Panc1 (cell line): ENCODE measurements at regions of chr20 and their contacts with region 1.

Region 1: GRCh38 chr20:59087829-59088433 is 45.3 kb upstream of the PRELID3B start:
- DNase-seq: peak; percentile 38
- ATAC-seq: peak; percentile 94
- H3K4me3 ChIP-seq: no peak overlapping the region
- H3K27ac ChIP-seq: no peak overlapping the region
- H3K4me1 ChIP-seq: no peaks in the 10 kb centered on the region
- H3K27me3 ChIP-seq: peaks cover 11% of the 10 kb centered on the region
- CTCF ChIP-seq: peak; percentile 92

Region 2: DNA sequence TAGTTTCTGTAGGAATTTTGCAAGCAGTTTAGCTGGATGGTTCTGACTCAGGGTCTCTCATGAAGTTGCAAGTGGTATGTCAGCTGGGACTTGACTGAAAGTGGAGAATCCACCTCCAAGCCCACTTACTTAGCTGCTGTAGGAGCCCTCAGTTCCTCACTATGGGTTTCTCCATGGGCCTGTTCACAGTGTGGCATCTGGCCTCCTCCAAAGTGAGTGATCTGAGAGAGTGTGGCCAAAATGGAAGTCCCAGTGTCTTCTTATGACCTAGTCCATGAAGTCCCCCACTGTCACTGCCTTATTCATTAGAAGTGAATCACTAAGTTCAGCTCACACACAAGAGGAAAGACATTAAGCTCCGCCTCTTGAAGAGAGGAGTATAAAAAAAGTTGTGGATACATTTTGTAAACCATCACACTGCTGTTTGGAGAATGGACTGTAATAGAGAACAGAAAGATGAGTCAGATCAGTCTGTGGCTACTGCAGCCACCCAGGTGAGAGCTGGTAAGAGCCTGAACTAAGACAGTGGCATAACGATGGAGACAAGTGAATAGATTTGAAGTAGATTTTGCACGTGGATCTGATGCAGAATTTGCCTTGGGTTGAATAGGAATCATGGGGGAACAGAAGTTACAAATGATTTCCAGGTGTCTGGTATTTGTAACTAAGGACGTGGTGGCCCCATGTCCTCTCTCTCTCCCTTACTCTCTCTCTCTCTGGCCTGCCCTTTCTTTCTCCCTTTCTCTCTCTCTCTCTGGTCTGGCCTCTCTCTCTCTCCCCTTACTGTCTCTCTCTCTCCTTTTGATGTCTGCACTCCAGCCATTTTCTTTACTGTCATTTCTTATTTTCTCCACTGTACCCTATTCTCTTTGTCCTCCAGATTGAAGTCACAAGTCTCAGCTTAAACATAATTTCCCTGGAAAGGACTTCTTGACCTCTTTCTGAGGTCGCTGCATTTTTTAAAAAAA is 111.6 kb before region 1 on chr20:
- CTCF ChIA-PET with region 1: no interaction called
- POLR2A ChIA-PET with region 1: no interaction called
- in situ Hi-C with region 1: no loop called
- intact Hi-C with region 1: no loop called
- DNase-seq: no peak
- ATAC-seq: no peak
- H3K4me3 ChIP-seq: no peak overlapping the region
- H3K27ac ChIP-seq: no peak overlapping the region
- H3K4me1 ChIP-seq: no peaks in the 10 kb centered on the region
- H3K27me3 ChIP-seq: no peaks in the 10 kb centered on the region
- CTCF ChIP-seq: no peak

Region 3: DNA sequence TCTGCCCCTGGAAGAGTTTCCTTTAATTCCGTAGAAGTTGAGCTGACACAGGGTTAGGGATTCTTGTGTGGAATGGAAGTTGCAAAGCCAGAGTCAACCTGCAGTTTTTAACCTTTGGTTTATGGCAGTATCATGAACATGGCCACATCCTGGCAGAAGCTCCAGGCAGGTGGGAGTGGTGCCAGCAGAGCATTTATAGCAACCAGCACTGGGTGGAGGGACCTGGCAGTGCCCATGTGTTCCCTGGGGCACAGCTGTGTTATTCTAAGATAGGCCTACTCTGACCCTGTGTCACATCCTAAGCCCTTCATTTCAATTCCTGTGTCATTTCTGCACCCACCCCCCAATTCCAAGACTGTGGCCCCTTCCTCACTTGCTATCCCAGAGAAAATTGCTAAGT is 49.6 kb after region 1 on chr20:
- CTCF ChIA-PET with region 1: no interaction called
- POLR2A ChIA-PET with region 1: no interaction called
- in situ Hi-C with region 1: no loop called
- intact Hi-C with region 1: no loop called
- DNase-seq: no peak
- ATAC-seq: no peak
- H3K4me3 ChIP-seq: no peak overlapping the region
- H3K27ac ChIP-seq: no peak overlapping the region
- H3K4me1 ChIP-seq: no peaks in the 10 kb centered on the region
- H3K27me3 ChIP-seq: peaks cover 3% of the 10 kb centered on the region; the same call in 1 of the 2 replicates
- CTCF ChIP-seq: no peak

Region 4: DNA sequence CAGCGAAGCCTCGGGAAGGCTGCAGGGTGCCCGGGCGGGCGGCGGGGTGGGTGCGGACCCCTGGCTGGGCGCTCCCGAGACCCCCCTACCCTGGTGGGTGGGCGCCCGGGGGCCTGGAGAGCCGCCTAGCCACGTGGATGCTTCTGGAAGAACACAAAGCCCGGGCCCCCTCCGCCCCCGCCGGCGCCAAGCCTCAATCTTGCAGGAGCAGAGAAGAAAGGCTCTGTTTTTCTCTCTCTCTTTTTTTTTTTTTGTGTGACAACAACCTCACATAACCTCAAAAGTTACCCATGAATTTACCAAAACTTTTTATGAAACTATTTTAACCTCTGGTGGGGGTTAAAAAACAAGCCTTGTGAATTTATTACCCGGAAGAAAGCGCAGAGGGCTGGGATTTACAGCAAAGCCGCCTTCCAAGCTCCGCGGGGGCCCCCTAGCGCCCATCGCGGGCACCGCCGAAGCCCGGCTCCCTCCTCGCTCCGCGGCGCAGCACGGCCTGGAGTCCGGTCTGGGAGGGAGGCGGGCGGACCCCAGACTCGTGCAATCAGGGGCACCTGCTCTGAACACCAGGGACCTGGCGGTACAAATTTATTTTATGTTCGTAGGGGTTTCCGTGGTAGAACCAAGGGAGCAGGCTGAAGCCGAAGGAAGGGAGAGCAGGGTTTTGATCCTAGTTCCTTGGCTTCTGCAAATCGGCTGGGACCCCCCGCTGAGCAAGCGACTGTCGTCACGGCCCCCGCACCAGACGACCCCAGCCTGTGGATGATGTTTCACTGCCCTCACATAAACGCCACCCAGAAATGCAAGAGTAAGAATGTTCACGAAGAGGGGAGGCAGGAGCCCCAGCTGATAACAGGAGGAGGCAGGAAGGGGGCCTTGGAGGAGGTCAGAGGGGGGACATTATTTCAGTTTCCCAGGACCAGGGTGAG is 134.6 kb after region 1 on chr20:
- CTCF ChIA-PET with region 1: interaction called, 9 read pairs
- POLR2A ChIA-PET with region 1: no interaction called
- in situ Hi-C with region 1: no loop called
- intact Hi-C with region 1: loop called (anchors 2 kb)
- DNase-seq: no peak
- ATAC-seq: peak; percentile 96
- H3K4me3 ChIP-seq: peak overlapping the region; percentile 38 to 43
- H3K27ac ChIP-seq: no peak overlapping the region
- H3K4me1 ChIP-seq: peaks cover 4% of the 10 kb centered on the region
- H3K27me3 ChIP-seq: peaks cover 55% of the 10 kb centered on the region
- CTCF ChIP-seq: peak; percentile 98

Region 5: GRCh38 chr20:59403261-59403961 is 315.5 kb after region 1 on chr20:
- CTCF ChIA-PET with region 1: no interaction called
- POLR2A ChIA-PET with region 1: no interaction called
- in situ Hi-C with region 1: no loop called
- intact Hi-C with region 1: loop called (anchors 5 kb)
- DNase-seq: no peak
- ATAC-seq: peak; percentile 70
- H3K4me3 ChIP-seq: no peak overlapping the region
- H3K27ac ChIP-seq: no peak overlapping the region
- H3K4me1 ChIP-seq: peaks cover 2% of the 10 kb centered on the region; the same call in 1 of the 2 replicates
- H3K27me3 ChIP-seq: peaks cover 35% of the 10 kb centered on the region
- CTCF ChIP-seq: peak; percentile 98

Region 6: GRCh38 chr20:59455402-59456341 is 367.7 kb after region 1 on chr20:
- CTCF ChIA-PET with region 1: interaction called, 7 read pairs
- POLR2A ChIA-PET with region 1: no interaction called
- in situ Hi-C with region 1: no loop called
- intact Hi-C with region 1: loop called (anchors 2 kb)
- DNase-seq: no peak
- ATAC-seq: peak; percentile 71
- H3K4me3 ChIP-seq: no peak overlapping the region
- H3K27ac ChIP-seq: no peak overlapping the region
- H3K4me1 ChIP-seq: no peaks in the 10 kb centered on the region
- H3K27me3 ChIP-seq: peaks cover 4% of the 10 kb centered on the region; the same call in 1 of the 2 replicates
- CTCF ChIP-seq: peak; percentile 81